ENCODE measurements at regions of chr3 and their contacts with region 1.

Region 1: DNA sequence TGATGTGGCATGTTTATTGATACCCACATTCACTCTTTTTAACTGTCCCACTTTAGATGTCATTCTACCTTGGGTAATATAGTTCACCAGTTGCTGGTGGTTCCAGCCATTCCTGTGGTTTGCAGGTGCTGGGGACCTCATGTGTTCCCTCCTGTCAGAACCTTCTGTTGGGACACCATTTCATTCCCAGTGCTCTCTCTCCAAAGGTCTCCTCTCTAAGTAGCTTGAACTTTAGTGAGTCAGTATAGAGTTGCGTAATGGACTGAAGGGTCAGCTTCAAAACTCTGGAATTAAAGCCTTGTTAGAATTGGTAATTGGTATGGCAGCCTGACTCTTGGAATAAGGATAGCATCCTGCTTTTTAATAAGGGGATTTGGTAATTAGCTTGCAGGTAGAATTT is 108.5 kb downstream of the PLCL2 start:
- DNase-seq: no peak
- ATAC-seq: peak; percentile 30 to 82 (median 71)
- H3K4me3 ChIP-seq: no peak overlapping the region
- H3K27ac ChIP-seq: no peak overlapping the region
- H3K4me1 ChIP-seq: peaks cover 59% of the 10 kb centered on the region
- H3K27me3 ChIP-seq: no peaks in the 10 kb centered on the region
- CTCF ChIP-seq: no peak

Region 2: DNA sequence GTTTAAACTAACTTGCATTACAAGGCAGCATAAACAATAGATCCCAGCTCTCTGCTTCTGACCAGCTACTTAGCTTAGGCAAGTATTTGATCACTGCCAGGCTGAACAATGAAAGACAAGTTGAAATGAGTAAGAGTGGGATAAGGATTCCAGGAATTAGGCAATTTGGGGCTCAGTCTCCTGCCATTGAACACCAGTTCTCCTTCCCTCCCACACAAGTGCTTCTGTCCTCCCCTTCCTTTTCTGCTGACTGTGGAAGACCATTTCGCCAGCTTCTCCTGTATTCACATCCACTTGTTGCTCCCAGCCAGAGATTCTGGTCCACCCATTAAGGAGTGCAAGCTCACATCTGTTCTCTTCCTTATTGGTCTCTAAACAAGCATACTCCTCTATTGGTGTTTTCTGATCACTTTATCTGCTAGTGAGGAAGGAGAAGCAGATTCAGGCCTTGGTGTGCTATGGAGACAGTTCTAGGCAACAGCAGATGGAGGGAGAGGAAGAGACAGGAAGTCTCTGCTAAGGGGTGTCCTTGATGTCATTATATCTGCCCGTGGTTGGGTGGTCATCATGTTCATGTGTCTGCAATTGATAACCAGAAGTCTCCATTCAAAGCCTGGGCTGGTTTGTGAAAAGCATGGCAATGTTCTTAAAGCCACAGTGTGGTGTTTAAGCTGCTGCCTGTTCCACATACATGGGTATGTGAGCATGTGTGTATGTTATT is 13.1 kb after region 1 on chr3:
- intact Hi-C with region 1: loop called in 1 of 2 experiments (anchors 1 kb)
- DNase-seq: no peak
- ATAC-seq: no peak
- H3K4me3 ChIP-seq: no peak overlapping the region
- H3K27ac ChIP-seq: no peak overlapping the region
- H3K4me1 ChIP-seq: peaks cover 25% of the 10 kb centered on the region
- H3K27me3 ChIP-seq: no peaks in the 10 kb centered on the region
- CTCF ChIP-seq: no peak

Region 3: DNA sequence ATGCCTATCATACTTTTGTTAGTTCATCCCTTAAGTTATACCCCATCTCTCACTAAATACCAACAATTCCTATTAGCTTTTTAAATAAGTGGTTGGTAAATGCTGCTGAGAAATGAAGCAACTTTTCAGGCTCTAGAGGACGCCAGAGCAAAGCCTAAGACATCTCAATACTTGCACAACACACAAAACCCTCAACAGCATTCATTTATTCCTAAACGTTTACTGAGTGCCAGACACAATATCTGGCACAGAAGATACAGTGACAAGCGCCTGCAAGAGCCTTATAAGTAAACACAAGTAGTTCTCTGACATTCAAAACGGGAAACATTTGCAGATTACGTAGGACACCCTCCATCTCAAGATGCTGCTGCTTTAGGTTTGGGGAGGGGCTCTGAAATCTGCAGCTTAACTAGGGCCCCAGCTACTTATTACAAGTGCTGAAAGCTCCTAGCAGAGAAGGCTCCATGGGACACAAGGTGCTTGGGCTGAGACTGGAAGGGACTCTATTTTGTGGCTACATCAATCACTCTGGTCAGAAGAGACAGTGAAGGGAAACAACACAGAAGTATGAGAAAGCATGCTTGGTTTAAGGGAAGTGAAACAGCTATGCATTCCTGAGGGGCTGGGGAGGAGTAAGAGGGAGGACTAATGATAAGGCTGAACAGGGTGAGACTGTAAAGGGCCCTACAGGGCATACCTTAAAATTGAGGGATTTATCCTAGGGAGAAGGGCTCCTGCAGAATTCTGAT is 202.8 kb after region 1 on chr3:
- intact Hi-C with region 1: no loop called
- DNase-seq: no peak
- ATAC-seq: peak in 2 of 4 donors; percentile 34 to 35
- H3K4me3 ChIP-seq: no peak overlapping the region
- H3K27ac ChIP-seq: no peak overlapping the region
- H3K4me1 ChIP-seq: peaks cover 34% of the 10 kb centered on the region
- H3K27me3 ChIP-seq: no peaks in the 10 kb centered on the region
- CTCF ChIP-seq: peak; percentile 23